ENCODE measurements at regions of chr6 and their contacts with region 1.

Region 1: GRCh38 chr6:149834513-149835481 is 29.4 kb downstream of the LRP11 start:
- DNase-seq: no peak
- H3K4me3 ChIP-seq: no peak overlapping the region
- H3K27me3 ChIP-seq: no peaks in the 10 kb centered on the region
- CTCF ChIP-seq: peak; percentile 83

Region 2: GRCh38 chr6:147936703-147937470 is 1897.9 kb before region 1 on chr6:
- CTCF ChIA-PET with region 1: no interaction called
- POLR2A ChIA-PET with region 1: interaction called, 14 read pairs
- DNase-seq: no peak
- H3K4me3 ChIP-seq: no peak overlapping the region
- H3K27me3 ChIP-seq: no peaks in the 10 kb centered on the region; the same call in 1 of the 2 replicates
- CTCF ChIP-seq: no peak

Region 3: GRCh38 chr6:149863697-149864577 is 29.1 kb after region 1 on chr6 and contains the start of gene LRP11:
- CTCF ChIA-PET with region 1: interaction called, 10 read pairs
- POLR2A ChIA-PET with region 1: no interaction called
- DNase-seq: no peak
- H3K4me3 ChIP-seq: peak within 1 kb of the TSS; percentile 65
- H3K27me3 ChIP-seq: no peaks in the 10 kb centered on the region
- CTCF ChIP-seq: no peak
- polyA plus RNA-seq, gene LRP11: 26.3 and 32.6 TPM in 2 replicates

Region 4: GRCh38 chr6:149895833-149896271 is 61.1 kb after region 1 on chr6:
- CTCF ChIA-PET with region 1: interaction called, 12 read pairs
- POLR2A ChIA-PET with region 1: no interaction called
- DNase-seq: no peak
- H3K4me3 ChIP-seq: no peak overlapping the region
- H3K27me3 ChIP-seq: no peaks in the 10 kb centered on the region
- CTCF ChIP-seq: no peak

Region 5: GRCh38 chr6:149925974-149926777 is 91.4 kb after region 1 on chr6:
- CTCF ChIA-PET with region 1: interaction called, 27 read pairs
- POLR2A ChIA-PET with region 1: no interaction called
- DNase-seq: no peak
- H3K4me3 ChIP-seq: peak overlapping the region; percentile 34
- H3K27me3 ChIP-seq: peaks cover 15% of the 10 kb centered on the region
- CTCF ChIP-seq: peak; percentile 94